ENCODE measurements at regions of chr1 and their contacts with region 1.

Region 1: GRCh38 chr1:109548321-109549267 is at the start of gene GNAI3:
- DNase-seq: peak; percentile 95 to 96
- H3K4me3 ChIP-seq: peak within 1 kb of the TSS; percentile 73 to 98 (median 85)
- H3K27ac ChIP-seq: peak within 1 kb of the TSS; percentile 98
- H3K4me1 ChIP-seq: peaks cover 0 to 7% of the 10 kb centered on the region in 2 donors
- H3K27me3 ChIP-seq: no peaks in the 10 kb centered on the region
- CTCF ChIP-seq: peak in 1 of 3 donors; percentile 6
- POLR2A ChIP-seq: peak; percentile 91
- total RNA-seq, gene GNAI3: 5.9 to 6.9 (median 6.2) TPM

Region 2: GRCh38 chr1:109589177-109589576 is 40.6 kb after region 1 on chr1:
- intact Hi-C with region 1: no loop called
- DNase-seq: no peak
- H3K4me3 ChIP-seq: no peak overlapping the region
- H3K27ac ChIP-seq: no peak overlapping the region
- H3K4me1 ChIP-seq: no peaks in the 10 kb centered on the region
- H3K27me3 ChIP-seq: no peaks in the 10 kb centered on the region
- CTCF ChIP-seq: no peak
- POLR2A ChIP-seq: no peak

Region 3: DNA sequence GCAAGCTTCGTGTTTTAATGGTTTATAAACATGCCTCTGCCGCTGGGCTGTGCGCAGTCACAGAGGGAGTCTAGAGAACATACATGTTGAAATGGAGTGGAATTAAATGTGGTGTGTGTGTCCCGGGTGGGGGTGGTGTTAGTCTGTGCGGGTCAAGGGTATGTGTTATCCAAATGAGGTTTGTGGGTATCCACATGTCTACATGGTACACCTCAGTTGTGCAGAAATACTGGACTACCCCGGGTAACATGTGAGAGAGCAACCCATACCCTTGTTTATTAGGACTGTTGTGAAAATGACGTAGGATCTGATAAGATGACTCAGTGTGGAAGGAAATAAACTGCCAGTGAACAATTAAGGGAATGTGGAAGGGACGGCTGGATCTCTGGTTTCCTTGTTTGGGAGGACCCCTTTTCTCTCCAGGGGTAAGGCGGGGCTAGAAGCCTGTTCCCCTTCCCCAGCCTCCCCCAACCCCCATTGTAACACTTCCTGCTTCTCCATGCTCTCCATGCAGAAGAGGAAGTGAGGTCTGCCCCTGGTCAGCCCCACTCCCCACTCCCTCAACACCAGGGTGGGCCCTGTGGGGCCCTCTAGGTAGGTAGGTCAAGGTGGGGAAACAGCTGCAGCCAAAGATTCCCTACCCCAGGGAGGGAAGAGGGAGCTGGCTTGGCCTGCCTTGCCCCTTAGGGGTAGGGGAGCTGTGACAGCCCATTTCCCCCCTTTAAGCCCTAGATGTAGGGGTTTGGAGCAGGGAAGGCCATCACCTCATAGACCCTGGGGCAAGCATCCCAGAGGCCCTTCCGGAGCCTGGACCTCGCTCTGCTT is 214.4 kb after region 1 on chr1:
- intact Hi-C with region 1: loop called (anchors 10 kb)
- DNase-seq: no peak
- H3K4me3 ChIP-seq: no peak overlapping the region
- H3K27ac ChIP-seq: no peak overlapping the region
- H3K4me1 ChIP-seq: no peaks in the 10 kb centered on the region
- H3K27me3 ChIP-seq: no peaks in the 10 kb centered on the region
- CTCF ChIP-seq: no peak
- POLR2A ChIP-seq: no peak

Measured in breast epithelium (tissue), 4 donors.